ENCODE measurements at regions of chr14 and their contacts with region 1.

Region 1: GRCh38 chr14:64986578-64987571 is at the start of gene FNTB:
- DNase-seq: peak; percentile 96
- H3K4me3 Mint-ChIP-seq: peak within 1 kb of the TSS; percentile 93
- H3K27ac Mint-ChIP-seq: peak within 1 kb of the TSS; percentile 96
- H3K4me1 Mint-ChIP-seq: peaks cover 28% of the 10 kb centered on the region
- H3K27me3 Mint-ChIP-seq: no peaks in the 10 kb centered on the region
- total RNA-seq, gene FNTB: 7.9 to 10.0 TPM

Region 2: DNA sequence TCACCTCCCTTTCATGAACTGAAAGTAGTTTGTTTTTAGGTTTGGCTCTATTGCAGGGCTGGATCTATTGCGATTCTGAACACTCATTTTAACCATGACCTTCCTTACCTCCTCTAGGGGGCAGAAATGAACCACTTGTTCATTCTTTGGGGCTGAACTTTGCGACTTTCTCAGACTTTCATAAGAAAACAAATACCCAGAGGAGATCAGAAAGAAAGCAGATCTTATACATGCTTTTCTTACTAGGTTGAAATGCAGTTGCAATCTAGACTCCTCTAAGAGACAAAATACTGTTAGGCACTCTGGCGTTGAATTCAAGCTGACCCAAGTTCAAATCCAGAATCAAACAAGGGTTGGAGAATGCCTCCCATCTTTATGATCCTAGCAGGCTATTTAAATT is 315.3 kb before region 1 on chr14:
- CTCF ChIA-PET with region 1: no interaction called
- intact Hi-C with region 1: loop called (anchors 1 kb)
- DNase-seq: no peak
- H3K4me3 Mint-ChIP-seq: no peak overlapping the region
- H3K27ac Mint-ChIP-seq: no peak overlapping the region
- H3K4me1 Mint-ChIP-seq: peaks cover 16% of the 10 kb centered on the region
- H3K27me3 Mint-ChIP-seq: no peaks in the 10 kb centered on the region

Region 3: DNA sequence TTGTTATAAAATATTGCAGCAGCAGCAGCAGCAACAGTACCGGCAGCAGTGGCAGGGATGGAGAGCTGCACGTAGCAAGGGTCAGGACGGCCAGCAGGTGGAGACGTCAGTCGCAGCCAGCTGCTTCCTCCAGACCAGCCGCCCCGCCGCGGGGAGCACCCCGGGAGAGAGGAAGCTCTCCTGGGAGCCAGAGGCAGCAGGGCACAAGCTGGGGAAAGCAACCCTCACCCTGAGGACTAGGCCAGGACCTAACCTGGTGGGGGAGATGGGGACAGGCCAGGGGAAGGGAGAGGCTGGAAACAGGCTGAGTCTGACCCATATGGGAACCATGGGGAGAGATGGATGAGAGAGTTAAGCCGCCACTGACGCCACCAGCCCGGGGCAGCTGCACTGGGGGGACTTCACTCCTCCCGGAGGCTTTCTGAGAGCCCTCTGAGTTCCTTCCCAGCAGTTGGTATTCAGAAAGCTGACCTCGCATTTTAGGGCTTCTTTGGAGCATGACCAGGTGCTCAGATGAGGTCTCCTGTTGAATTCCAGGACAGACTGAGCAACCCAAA is 163.5 kb before region 1 on chr14:
- CTCF ChIA-PET with region 1: interaction called, 9 read pairs
- intact Hi-C with region 1: loop called (anchors 1 kb)
- DNase-seq: peak; percentile 82
- H3K4me3 Mint-ChIP-seq: peak overlapping the region; percentile 13
- H3K27ac Mint-ChIP-seq: no peak overlapping the region
- H3K4me1 Mint-ChIP-seq: peaks cover 4% of the 10 kb centered on the region
- H3K27me3 Mint-ChIP-seq: peaks cover 8% of the 10 kb centered on the region

Region 4: GRCh38 chr14:64914237-64914971 is 72.5 kb before region 1 on chr14 and contains the start of gene CHURC1:
- CTCF ChIA-PET with region 1: no interaction called
- intact Hi-C with region 1: loop called (anchors 1 kb)
- DNase-seq: peak; percentile 98
- H3K4me3 Mint-ChIP-seq: peak within 1 kb of the TSS; percentile 78
- H3K27ac Mint-ChIP-seq: peak within 1 kb of the TSS; percentile 88
- H3K4me1 Mint-ChIP-seq: peaks cover 51% of the 10 kb centered on the region
- H3K27me3 Mint-ChIP-seq: no peaks in the 10 kb centered on the region
- total RNA-seq, gene CHURC1: 49.6 to 59.7 TPM

Region 5: DNA sequence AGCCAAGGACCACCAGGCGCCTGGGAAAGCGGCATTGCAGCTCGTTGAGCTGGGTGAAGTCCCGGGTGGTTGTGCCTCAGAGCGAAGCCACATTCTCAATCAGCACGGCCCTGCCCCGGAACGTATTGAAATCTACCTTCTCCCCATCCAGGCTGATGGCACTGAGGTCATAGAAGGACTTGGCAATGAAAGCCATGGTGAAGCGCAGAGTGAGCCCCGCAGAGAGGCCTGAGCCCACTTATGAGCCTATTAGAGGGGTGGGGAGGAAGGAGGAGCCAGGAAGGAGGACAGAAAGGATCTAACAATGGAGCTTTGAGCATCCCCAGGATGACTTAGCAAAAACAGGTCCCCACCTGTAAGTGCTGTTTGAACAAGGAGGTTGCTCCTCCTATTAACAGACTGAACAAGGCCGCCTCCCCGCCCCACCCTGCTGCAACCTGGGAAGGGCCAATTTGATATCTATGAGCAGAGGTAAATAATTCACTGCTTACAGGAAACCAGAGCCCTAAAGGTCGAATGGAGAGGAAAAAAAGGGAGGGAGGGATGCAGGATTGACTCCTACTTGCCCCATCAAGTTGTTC is 44.3 kb before region 1 on chr14 and contains the start of gene GPX2:
- CTCF ChIA-PET with region 1: no interaction called
- intact Hi-C with region 1: no loop called
- DNase-seq: no peak
- H3K4me3 Mint-ChIP-seq: no peak within 1 kb of the TSS
- H3K27ac Mint-ChIP-seq: no peak within 1 kb of the TSS
- H3K4me1 Mint-ChIP-seq: peaks cover 54% of the 10 kb centered on the region
- H3K27me3 Mint-ChIP-seq: no peaks in the 10 kb centered on the region
- total RNA-seq, gene GPX2: not detected

Region 6: DNA sequence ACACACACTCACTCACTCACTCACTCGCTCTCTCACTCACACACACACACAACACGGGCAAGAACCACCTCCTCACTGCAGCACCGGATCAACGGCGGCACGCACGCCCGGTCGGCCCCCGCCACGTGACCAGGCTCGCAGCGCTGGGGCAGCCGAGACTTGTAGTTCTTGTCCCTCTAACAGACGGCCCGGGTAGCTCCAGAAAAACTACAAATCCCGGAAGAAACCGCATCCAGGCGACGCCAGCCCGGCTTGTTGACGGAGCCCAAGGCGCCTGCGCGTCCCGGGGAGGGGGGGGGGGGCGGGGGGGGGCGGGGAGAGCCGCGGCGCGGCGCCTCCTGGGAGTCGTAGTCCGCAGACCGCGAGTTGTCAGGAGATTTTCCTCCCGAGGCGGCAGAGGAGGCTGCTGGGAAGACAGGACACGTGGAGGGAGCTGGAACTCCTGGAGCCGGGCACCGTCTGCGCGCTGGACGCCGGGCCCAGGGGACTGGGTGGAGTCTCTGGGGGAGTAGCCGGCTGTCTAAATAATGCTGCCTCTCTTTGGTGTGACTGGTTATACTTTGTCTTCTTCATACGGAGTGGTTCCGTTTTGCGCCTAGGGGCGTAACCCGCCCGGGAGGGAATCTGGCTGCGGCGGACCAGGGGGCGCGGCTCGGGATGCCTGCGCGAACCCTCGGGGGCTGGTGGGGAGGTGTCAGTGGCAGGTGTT is 115.7 kb after region 1 on chr14 and contains the start of gene MAX:
- CTCF ChIA-PET with region 1: interaction called, 5 read pairs
- intact Hi-C with region 1: loop called (anchors 1 kb)
- DNase-seq: peak; percentile 99
- H3K4me3 Mint-ChIP-seq: peak within 1 kb of the TSS; percentile 87
- H3K27ac Mint-ChIP-seq: peak within 1 kb of the TSS; percentile 91
- H3K4me1 Mint-ChIP-seq: peaks cover 30% of the 10 kb centered on the region
- H3K27me3 Mint-ChIP-seq: no peaks in the 10 kb centered on the region
- total RNA-seq, gene MAX: 67.9 to 75.1 TPM

Region 7: DNA sequence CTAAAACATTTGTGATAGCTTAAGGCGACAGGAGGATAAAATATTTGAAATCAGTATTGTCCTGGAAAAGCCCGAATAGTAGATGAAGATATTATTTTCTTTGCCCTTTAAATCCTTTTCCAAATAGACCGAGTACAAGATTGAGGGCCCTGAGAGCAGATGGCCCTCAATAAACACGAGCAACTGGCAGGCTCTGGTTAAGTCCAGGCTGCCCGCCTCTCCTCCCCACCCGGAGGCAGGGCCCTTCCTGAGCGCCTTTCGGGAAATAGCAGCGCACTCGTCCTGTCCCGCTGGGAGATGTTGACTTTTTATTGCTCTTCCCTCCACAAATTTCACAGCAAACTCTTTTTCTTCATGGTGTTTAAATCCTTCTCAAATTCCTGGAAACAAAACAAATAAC is 166.2 kb after region 1 on chr14:
- CTCF ChIA-PET with region 1: no interaction called
- intact Hi-C with region 1: no loop called
- DNase-seq: no peak
- H3K4me3 Mint-ChIP-seq: no peak overlapping the region
- H3K27ac Mint-ChIP-seq: no peak overlapping the region
- H3K4me1 Mint-ChIP-seq: no peaks in the 10 kb centered on the region
- H3K27me3 Mint-ChIP-seq: no peaks in the 10 kb centered on the region

Region 8: GRCh38 chr14:65287264-65288131 is 300.6 kb after region 1 on chr14:
- CTCF ChIA-PET with region 1: no interaction called
- intact Hi-C with region 1: loop called (anchors 2 kb)
- DNase-seq: peak; percentile 66
- H3K4me3 Mint-ChIP-seq: peak overlapping the region; percentile 74
- H3K27ac Mint-ChIP-seq: peak overlapping the region; percentile 98
- H3K4me1 Mint-ChIP-seq: peaks cover 64% of the 10 kb centered on the region
- H3K27me3 Mint-ChIP-seq: no peaks in the 10 kb centered on the region

Region 9: DNA sequence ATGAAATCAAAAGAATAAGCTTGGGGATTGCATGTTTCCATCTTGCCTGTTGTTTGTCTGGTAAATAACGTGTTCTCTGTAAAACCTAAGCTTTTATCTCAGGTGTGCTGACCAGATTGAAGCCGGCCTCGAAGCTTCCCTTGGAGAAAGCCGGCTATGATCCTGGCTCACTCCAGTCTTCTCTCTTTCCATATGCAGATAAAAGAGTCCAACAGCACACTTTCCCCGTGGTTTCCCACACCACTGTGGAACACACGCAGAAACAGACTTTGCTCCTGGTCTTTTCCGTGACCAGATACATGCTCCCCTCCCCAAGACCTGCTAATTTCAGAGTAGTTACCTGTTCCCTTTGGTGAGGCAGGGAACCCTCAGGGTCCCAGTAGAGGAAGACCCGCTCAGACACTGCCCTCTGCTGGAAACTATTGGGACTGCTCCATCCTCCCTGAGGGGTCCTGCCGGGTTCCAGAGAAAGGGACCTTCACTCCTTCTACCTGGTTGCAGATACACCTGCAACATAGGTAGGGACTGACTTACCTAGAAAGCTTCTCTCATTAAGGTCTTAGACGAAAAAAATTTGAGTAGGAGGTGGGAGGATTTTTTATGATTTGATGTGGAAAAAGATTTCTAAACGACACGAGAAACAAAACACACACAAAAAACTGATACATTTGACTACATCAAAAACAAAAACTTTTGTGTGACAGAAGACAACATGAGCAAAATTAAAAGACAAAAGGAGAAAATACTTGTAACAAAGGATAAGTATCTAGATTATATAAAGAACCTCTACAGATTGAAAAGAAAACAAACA is 1083.8 kb after region 1 on chr14:
- CTCF ChIA-PET with region 1: no interaction called
- intact Hi-C with region 1: loop called (anchors 5 kb)
- DNase-seq: peak; percentile 73
- H3K4me3 Mint-ChIP-seq: no peak overlapping the region
- H3K27ac Mint-ChIP-seq: no peak overlapping the region
- H3K4me1 Mint-ChIP-seq: no peaks in the 10 kb centered on the region
- H3K27me3 Mint-ChIP-seq: no peaks in the 10 kb centered on the region